ENCODE measurements at regions of chr10 and their contacts with region 1.

Region 1: DNA sequence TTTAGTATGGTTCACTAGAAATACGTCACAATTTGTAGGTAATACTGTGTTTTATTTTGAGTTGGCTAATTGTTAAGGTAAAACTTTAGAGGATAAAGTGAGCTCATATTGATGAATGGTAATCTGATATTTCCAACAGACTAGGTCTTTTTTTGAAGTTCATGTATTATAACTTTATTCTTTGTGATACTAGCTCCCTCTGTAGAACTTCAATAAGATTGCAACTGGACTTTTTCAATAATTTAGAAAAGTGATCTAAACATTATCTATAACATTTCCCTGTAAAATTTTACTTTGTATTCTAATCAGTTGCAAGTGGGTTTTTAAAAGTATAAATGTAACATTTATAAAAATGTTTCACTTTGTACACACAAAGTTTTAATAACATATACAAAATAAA is 83.5 kb downstream of the ADK start:
- DNase-seq: no peak
- ATAC-seq: no peak
- H3K4me3 Mint-ChIP-seq: no peak overlapping the region
- H3K27ac Mint-ChIP-seq: no peak overlapping the region
- H3K4me1 Mint-ChIP-seq: no peaks in the 10 kb centered on the region
- H3K27me3 Mint-ChIP-seq: no peaks in the 10 kb centered on the region

Region 2: GRCh38 chr10:73899423-73899822 is 335.1 kb before region 1 on chr10:
- CTCF ChIA-PET with region 1: no interaction called
- POLR2A ChIA-PET with region 1: no interaction called
- intact Hi-C with region 1: no loop called
- DNase-seq: no peak
- ATAC-seq: no peak
- H3K4me3 Mint-ChIP-seq: no peak overlapping the region
- H3K27ac Mint-ChIP-seq: no peak overlapping the region
- H3K4me1 Mint-ChIP-seq: peaks cover 3% of the 10 kb centered on the region
- H3K27me3 Mint-ChIP-seq: peaks cover 9% of the 10 kb centered on the region

Region 3: GRCh38 chr10:74120911-74121310 is 113.7 kb before region 1 on chr10:
- CTCF ChIA-PET with region 1: interaction called, 3 read pairs
- POLR2A ChIA-PET with region 1: no interaction called
- intact Hi-C with region 1: loop called in 1 of 2 experiments (anchors 10 kb)
- DNase-seq: no peak
- ATAC-seq: no peak
- H3K4me3 Mint-ChIP-seq: no peak overlapping the region
- H3K27ac Mint-ChIP-seq: peak overlapping the region; percentile 24
- H3K4me1 Mint-ChIP-seq: peaks cover 8% of the 10 kb centered on the region
- H3K27me3 Mint-ChIP-seq: no peaks in the 10 kb centered on the region